ENCODE measurements at regions of chr4 and their contacts with region 1.

Region 1: DNA sequence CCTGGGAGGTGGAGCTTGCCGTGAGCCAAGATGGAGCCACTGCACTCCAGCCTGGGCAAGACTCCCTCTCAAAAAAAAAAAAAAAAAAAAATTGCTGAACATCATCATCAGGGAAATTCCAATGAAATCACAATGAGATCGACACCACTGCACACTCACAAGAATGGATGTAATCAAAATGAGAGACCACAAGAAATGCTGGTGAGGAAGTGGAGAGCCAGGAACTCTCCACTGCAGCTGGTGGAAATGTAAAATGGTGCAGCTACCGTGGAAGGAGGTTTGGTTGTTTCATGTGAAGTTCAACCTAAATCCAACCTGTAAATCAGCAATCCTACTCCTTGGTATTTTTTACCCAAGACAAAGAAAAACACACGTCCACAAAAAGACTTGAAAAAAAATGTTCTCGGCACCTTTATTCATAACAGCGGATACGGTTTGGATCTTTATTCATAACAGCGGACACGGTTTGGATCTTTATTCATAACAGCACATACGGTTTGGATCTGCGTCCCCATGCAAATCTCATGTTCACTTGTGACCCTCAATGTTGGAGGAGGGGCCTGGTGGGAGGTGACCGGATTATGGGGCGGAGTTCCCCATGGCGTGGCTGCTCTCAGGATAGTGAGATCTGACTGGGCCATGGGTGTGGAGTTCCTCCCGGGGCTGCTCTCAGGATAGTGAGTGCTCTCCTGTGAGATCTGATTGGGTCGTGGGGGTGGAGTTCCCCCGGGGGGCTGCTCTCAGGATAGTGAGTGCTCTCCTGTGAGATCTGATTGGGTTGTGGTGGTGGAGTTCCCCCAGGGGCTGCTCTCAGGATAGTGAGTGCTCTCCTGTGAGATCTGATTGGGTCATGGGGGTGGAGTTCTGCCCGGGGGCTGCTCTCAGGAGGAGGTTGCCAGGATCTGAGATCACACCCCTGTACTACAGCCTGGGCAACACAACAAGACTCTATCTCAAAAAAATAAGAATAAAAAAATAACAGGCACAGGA is 7.7 kb downstream of the GAK start:
- DNase-seq: no peak
- ATAC-seq: peak; percentile 37
- H3K4me3 Mint-ChIP-seq: peak overlapping the region; percentile 29
- H3K27ac Mint-ChIP-seq: peak overlapping the region; percentile 70
- H3K4me1 Mint-ChIP-seq: peaks cover 78% of the 10 kb centered on the region
- H3K27me3 Mint-ChIP-seq: no peaks in the 10 kb centered on the region
- CTCF ChIP-seq: no peak

Region 2: DNA sequence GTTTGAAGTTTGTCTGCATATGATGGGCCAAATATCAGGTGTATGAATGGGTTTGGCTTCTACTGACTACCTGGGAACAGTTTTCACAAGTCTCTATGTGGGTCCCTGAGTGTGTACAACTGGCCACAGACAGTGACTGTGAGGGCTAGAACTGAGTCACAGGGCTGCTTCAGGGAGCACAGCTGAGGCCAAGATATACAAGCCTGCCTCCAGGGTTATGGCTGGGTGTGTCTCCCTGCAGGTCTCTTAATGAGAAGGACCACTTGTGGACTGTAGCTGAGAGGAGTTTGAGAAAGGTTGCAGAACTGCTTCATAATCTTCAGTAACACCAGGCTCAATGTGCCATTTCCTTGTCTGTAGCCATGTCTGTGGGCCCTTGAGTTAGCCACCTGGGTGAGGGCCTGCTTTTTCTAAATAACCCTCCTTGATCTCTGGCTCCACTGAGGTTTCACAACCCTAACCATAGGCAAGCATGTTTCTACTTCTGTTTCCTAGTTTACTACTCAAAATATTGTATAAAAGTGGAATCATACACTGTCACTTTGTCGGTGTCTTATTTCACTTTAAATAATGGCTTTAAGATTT is 700.4 kb before region 1 on chr4:
- CTCF ChIA-PET with region 1: no interaction called
- POLR2A ChIA-PET with region 1: no interaction called
- intact Hi-C with region 1: no loop called
- DNase-seq: no peak
- ATAC-seq: no peak
- H3K4me3 Mint-ChIP-seq: no peak overlapping the region
- H3K27ac Mint-ChIP-seq: no peak overlapping the region
- H3K4me1 Mint-ChIP-seq: no peaks in the 10 kb centered on the region
- H3K27me3 Mint-ChIP-seq: no peaks in the 10 kb centered on the region
- CTCF ChIP-seq: no peak

Region 3: GRCh38 chr4:1055721-1056590 is 131.6 kb after region 1 on chr4:
- CTCF ChIA-PET with region 1: no interaction called
- POLR2A ChIA-PET with region 1: no interaction called
- intact Hi-C with region 1: loop called (anchors 5 kb)
- DNase-seq: peak; percentile 64
- ATAC-seq: peak; percentile 95
- H3K4me3 Mint-ChIP-seq: peak overlapping the region; percentile 68
- H3K27ac Mint-ChIP-seq: peak overlapping the region; percentile 67
- H3K4me1 Mint-ChIP-seq: peaks cover 15% of the 10 kb centered on the region
- H3K27me3 Mint-ChIP-seq: peaks cover 14% of the 10 kb centered on the region
- CTCF ChIP-seq: no peak

Measured in activated B cell treated with CpG ODN at 0.5 μM for 24 hours (primary cell).